SK-N-SH (cell line): ENCODE measurements at regions of chr9 and their contacts with region 1.

Region 1: DNA sequence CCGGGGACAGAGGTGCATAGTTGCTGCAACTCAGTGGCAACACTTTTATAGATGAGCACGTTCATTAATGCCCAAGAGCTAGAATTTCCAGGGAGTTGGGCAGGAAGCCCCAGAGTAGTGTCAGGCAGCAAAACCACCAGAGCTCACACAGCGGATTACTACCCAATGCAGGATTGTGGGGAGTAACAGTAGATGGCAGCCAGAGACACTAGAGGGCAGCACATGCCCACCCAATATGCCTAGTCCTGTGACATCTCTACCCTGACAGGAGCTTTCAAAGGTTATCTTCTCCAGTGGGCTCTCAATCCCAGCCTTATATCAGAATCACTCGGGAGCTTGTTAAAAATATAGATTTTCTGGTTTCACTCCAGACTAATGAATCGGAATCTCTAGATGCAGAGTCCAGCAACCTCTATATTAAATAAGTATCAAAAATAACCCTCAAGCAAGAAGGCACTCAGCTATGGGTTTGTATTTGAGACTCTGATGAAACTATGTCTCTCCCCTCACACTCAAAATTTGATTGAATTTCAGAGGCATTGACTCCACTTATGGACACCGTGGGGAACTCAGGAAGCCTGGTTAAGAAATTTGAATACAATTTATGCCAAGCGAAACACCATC is 58.4 kb upstream of the PHF24 start:
- DNase-seq: peak; percentile 78
- H3K4me3 ChIP-seq: no peak overlapping the region; a peak in 1 of 4 replicates
- H3K27ac ChIP-seq: no peak overlapping the region
- H3K4me1 ChIP-seq: no peaks in the 10 kb centered on the region
- H3K27me3 ChIP-seq: peaks cover 47% of the 10 kb centered on the region
- CTCF ChIP-seq: peak; percentile 87
- EP300 ChIP-seq: no peak
- RAD21 ChIP-seq: peak; percentile 96

Region 2: DNA sequence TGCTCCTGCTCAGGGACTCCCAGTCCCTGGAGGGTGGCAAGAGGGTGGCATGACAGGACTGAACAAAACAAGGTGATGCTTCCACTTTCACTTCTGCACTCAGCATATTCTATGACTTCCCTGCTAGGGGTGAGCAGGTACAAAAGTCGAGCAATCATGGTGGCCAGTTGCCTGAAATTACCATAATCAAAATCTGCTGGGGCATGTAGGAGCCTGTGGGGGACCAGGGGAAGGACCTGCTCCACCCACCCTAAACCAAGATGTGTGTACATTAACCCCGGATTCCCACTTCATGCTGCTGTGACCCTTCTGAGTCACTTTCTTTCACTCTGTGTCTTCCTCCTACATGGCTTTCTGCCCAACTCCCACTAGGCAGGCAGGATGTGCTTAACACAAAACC is 14.9 kb before region 1 on chr9:
- CTCF ChIA-PET with region 1: interaction called, 28 read pairs
- POLR2A ChIA-PET with region 1: no interaction called
- DNase-seq: no peak
- H3K4me3 ChIP-seq: no peak overlapping the region
- H3K27ac ChIP-seq: no peak overlapping the region
- H3K4me1 ChIP-seq: no peaks in the 10 kb centered on the region
- H3K27me3 ChIP-seq: no peaks in the 10 kb centered on the region
- CTCF ChIP-seq: no peak
- EP300 ChIP-seq: no peak
- RAD21 ChIP-seq: no peak

Region 3: GRCh38 chr9:34961574-34962490 is 62.2 kb after region 1 on chr9:
- CTCF ChIA-PET with region 1: interaction called, 10 read pairs
- POLR2A ChIA-PET with region 1: no interaction called
- DNase-seq: no peak
- H3K4me3 ChIP-seq: no peak overlapping the region
- H3K27ac ChIP-seq: no peak overlapping the region
- H3K4me1 ChIP-seq: peaks cover 0 to 3% of the 10 kb centered on the region in 2 experiments; a peak in 1 of 4 replicates
- H3K27me3 ChIP-seq: peaks cover 63% of the 10 kb centered on the region
- CTCF ChIP-seq: no peak
- EP300 ChIP-seq: no peak
- RAD21 ChIP-seq: no peak

Region 4: DNA sequence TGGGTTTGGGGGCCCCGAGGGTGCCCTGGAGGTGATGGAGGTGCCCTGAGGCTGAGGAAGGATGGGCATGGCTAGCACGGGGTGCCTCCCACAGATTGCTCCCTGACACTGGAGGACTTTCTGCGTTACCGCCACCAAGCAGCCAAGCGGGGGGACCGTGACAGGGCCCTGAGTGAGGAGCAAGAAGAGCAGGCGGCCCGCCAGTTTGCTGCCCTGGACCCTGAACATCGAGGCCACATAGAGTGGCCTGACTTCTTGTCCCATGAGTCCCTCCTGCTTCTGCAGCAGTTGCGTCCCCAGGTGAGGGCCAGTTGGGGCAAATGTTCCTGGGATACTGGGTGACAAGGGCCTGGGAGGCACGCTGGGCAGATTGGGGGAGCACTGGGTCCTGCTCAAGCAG is 76.8 kb after region 1 on chr9:
- CTCF ChIA-PET with region 1: interaction called, 155 read pairs
- POLR2A ChIA-PET with region 1: interaction called, 5 read pairs
- DNase-seq: no peak
- H3K4me3 ChIP-seq: no peak overlapping the region
- H3K27ac ChIP-seq: no peak overlapping the region
- H3K4me1 ChIP-seq: no peaks in the 10 kb centered on the region; a peak in 1 of 4 replicates
- H3K27me3 ChIP-seq: peaks cover 52% of the 10 kb centered on the region
- CTCF ChIP-seq: no peak
- EP300 ChIP-seq: no peak
- RAD21 ChIP-seq: no peak

Region 5: DNA sequence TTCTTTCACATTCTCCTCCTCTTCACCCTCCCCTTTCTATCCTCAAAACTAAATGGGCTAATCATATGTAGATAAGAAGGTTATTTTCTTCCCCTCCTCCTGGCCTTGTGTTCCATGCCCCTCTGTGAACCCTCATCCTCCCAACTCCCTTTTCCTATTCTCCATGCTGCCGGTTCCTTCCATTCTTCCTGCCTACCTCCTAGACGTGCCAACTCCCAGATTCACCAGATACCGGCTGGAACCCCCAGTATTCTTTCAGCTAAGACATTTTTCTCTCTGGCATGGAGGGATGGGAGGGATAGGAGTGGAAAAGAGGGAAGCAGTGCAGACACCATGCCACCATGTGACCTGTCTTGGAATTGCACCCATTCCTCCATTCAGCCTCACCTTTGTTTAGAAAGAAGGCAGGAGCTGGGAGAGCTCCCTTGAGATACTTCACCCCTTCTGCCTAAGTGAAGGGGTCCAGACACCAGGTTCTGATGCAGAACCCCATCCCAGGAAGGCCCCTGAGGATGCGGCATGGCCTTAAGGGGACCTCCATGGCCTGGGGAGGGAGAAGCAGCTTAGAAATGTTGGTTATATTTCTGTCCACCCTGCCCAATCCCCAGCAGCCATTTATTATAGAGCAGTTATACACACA is 94.7 kb after region 1 on chr9:
- CTCF ChIA-PET with region 1: interaction called, 174 read pairs
- POLR2A ChIA-PET with region 1: interaction called, 19 read pairs
- DNase-seq: peak; percentile 80
- H3K4me3 ChIP-seq: no peak overlapping the region; a peak in 1 of 4 replicates
- H3K27ac ChIP-seq: peak overlapping the region; percentile 75 to 88; a peak in 3 of 4 replicates
- H3K4me1 ChIP-seq: peaks cover 28 to 48% of the 10 kb centered on the region in 2 experiments
- H3K27me3 ChIP-seq: no peaks in the 10 kb centered on the region
- CTCF ChIP-seq: peak; percentile 74
- EP300 ChIP-seq: no peak
- RAD21 ChIP-seq: peak; percentile 75

Region 6: GRCh38 chr9:35056571-35057270 is 157.1 kb after region 1 on chr9:
- CTCF ChIA-PET with region 1: interaction called, 78 read pairs
- POLR2A ChIA-PET with region 1: no interaction called
- DNase-seq: no peak
- H3K4me3 ChIP-seq: no peak overlapping the region
- H3K27ac ChIP-seq: no peak overlapping the region
- H3K4me1 ChIP-seq: no peaks in the 10 kb centered on the region
- H3K27me3 ChIP-seq: no peaks in the 10 kb centered on the region
- CTCF ChIP-seq: no peak
- EP300 ChIP-seq: no peak
- RAD21 ChIP-seq: no peak

Region 7: GRCh38 chr9:35096035-35096849 is 196.6 kb after region 1 on chr9 and contains the start of gene PIGO:
- CTCF ChIA-PET with region 1: interaction called, 54 read pairs
- POLR2A ChIA-PET with region 1: no interaction called
- DNase-seq: peak; percentile 92
- H3K4me3 ChIP-seq: peak within 1 kb of the TSS; percentile 84 to 99
- H3K27ac ChIP-seq: peak within 1 kb of the TSS; percentile 95 to 96
- H3K4me1 ChIP-seq: peaks cover 5 to 11% of the 10 kb centered on the region in 2 experiments; a peak in 1 of 4 replicates
- H3K27me3 ChIP-seq: no peaks in the 10 kb centered on the region
- CTCF ChIP-seq: peak; percentile 81
- EP300 ChIP-seq: no peak; a peak in 1 of 4 replicates
- RAD21 ChIP-seq: peak; percentile 63
- polyA plus RNA-seq, gene PIGO: 31.0 and 38.5 TPM in 2 replicates